ENCODE measurements at regions of chr12 and their contacts with region 1.

Region 1: DNA sequence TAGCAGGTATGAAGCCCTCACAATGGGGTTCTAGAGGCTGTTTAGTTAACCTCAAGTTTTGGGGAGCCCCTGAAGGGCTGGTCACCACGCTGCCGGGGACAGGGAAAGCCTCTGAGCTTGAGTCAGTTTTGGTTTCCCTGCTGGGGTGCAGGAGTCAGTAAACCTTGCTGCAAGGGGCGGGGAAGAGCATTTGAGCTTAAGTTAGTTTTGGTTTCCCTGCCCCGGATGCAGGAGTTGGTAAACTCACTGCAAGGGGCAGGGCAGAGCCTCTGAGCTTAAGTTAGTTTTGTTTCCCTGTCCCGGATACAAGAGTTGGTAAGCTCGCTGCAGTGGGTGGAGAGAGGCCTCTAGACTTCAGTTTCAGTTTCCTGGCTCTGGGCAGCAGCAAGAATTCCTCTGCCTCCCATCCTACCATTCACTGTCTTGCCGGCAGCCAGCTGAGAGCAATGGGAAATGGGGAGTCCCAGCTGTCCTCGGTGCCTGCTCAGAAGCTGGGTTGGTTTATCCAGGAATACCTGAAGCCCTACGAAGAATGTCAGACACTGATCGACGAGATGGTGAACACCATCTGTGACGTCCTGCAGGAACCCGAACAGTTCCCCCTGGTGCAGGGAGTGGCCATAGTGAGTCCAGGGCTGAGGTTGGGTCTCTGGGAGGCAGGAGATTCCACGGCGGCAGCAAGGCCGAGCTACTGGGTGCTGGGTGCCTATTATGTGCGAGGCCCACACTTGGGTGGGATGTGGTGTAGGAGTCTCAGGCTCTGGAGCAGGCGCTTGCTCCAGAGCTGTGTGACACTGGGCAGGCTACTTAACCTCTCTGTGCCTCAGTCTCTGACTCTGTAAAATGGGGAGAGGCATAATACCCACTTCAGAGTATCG is at the start of gene OAS2:
- DNase-seq: peak; percentile 91
- ATAC-seq: peak; percentile 91
- H3K4me3 Mint-ChIP-seq: peak within 1 kb of the TSS; percentile 99
- H3K27ac Mint-ChIP-seq: peak within 1 kb of the TSS; percentile 99
- H3K4me1 Mint-ChIP-seq: peaks cover 35% of the 10 kb centered on the region
- H3K27me3 Mint-ChIP-seq: no peaks in the 10 kb centered on the region
- CTCF ChIP-seq: no peak
- total RNA-seq, gene OAS2: 95.7 to 104 TPM

Region 2: GRCh38 chr12:112887550-112887949 is 90.9 kb before region 1 on chr12:
- CTCF ChIA-PET with region 1: no interaction called
- POLR2A ChIA-PET with region 1: no interaction called
- intact Hi-C with region 1: no loop called
- DNase-seq: no peak
- ATAC-seq: no peak
- H3K4me3 Mint-ChIP-seq: no peak overlapping the region
- H3K27ac Mint-ChIP-seq: no peak overlapping the region
- H3K4me1 Mint-ChIP-seq: no peaks in the 10 kb centered on the region
- H3K27me3 Mint-ChIP-seq: peaks cover 2% of the 10 kb centered on the region
- CTCF ChIP-seq: no peak

Region 3: DNA sequence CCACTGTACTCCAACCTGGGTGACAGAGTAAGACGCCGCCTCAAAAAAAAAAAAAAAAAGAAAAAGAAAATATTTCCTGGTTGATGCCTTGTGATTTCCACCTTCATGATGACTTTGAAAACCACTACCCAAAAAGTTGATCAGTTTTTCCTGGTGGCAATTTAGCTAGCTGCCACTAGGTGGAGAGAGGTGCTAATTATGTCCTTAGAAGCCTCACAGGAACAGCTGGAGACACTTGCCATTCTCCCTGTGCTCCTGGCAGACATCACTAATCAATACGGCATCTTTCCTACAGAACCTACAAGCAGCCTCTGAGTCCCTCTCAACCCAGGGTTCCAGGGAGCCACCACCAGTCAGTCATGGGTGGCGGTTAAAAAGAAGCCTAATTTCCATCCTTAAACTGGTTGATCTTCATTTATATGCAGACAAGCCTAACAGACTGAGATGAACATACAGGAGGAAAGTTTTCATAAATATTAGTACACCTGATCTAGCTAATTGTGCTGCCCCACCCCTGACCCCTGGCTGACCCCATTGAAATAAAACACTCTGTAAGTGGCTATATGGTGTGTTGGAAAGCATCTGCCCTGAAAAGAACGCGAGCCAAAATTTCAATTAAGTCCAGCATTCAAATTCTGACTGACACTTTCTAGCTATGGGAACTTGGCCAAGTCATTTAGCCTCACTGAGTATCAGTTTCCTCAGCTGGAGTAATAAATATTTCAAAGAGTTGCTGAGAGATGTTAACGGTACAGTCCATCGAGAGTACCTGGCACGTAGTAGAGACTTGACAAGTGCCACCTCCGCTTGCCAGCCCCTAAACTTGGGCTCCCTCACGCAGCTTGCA is 77.9 kb before region 1 on chr12:
- CTCF ChIA-PET with region 1: interaction called, 24 read pairs
- POLR2A ChIA-PET with region 1: interaction called, 5 read pairs
- intact Hi-C with region 1: no loop called
- DNase-seq: peak; percentile 60
- ATAC-seq: peak; percentile 67
- H3K4me3 Mint-ChIP-seq: no peak overlapping the region
- H3K27ac Mint-ChIP-seq: no peak overlapping the region
- H3K4me1 Mint-ChIP-seq: peaks cover 15% of the 10 kb centered on the region
- H3K27me3 Mint-ChIP-seq: no peaks in the 10 kb centered on the region
- CTCF ChIP-seq: peak; percentile 86

Region 4: DNA sequence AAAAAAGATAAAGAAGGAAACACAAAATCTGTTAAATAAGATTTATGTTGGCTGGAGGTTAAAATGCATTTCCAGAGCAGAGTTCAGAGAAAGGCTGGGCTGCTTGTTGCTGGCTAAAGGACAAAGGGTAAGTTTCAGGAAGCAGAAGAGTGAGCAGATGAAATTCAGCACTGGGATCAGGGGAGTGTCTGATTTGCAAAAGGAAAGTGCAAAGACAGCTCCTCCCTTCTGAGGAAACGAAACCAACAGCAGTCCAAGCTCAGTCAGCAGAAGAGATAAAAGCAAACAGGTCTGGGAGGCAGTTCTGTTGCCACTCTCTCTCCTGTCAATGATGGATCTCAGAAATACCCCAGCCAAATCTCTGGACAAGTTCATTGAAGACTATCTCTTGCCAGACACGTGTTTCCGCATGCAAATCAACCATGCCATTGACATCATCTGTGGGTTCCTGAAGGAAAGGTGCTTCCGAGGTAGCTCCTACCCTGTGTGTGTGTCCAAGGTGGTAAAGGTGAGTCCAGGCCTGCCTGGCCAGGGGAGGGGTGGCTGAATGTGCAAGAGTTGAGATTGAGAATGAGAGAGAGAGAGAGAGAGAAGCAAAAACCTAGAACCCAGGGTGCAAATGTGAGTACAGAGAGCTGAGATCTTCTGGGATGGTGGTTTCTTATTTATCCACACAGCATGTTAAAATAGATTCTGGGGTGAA is 71.5 kb before region 1 on chr12 and contains the start of gene OAS1:
- CTCF ChIA-PET with region 1: interaction called, 24 read pairs
- POLR2A ChIA-PET with region 1: interaction called, 28 read pairs
- intact Hi-C with region 1: no loop called
- DNase-seq: peak; percentile 44
- ATAC-seq: peak; percentile 89
- H3K4me3 Mint-ChIP-seq: peak within 1 kb of the TSS; percentile 94
- H3K27ac Mint-ChIP-seq: peak within 1 kb of the TSS; percentile 94
- H3K4me1 Mint-ChIP-seq: peaks cover 51% of the 10 kb centered on the region
- H3K27me3 Mint-ChIP-seq: no peaks in the 10 kb centered on the region
- CTCF ChIP-seq: no peak
- total RNA-seq, gene OAS1: 22.7 to 26.8 TPM

Region 5: GRCh38 chr12:112937741-112938719 is 40.4 kb before region 1 on chr12 and contains the start of gene OAS3:
- CTCF ChIA-PET with region 1: interaction called, 11 read pairs
- POLR2A ChIA-PET with region 1: interaction called, 28 read pairs
- intact Hi-C with region 1: no loop called
- DNase-seq: peak; percentile 63
- ATAC-seq: peak; percentile 68
- H3K4me3 Mint-ChIP-seq: peak within 1 kb of the TSS; percentile 82
- H3K27ac Mint-ChIP-seq: peak within 1 kb of the TSS; percentile 84
- H3K4me1 Mint-ChIP-seq: peaks cover 28% of the 10 kb centered on the region
- H3K27me3 Mint-ChIP-seq: no peaks in the 10 kb centered on the region
- CTCF ChIP-seq: no peak
- total RNA-seq, gene OAS3: 21.4 to 22.2 TPM

Region 6: GRCh38 chr12:112963227-112963867 is 15.1 kb before region 1 on chr12:
- CTCF ChIA-PET with region 1: no interaction called
- POLR2A ChIA-PET with region 1: interaction called, 32 read pairs
- intact Hi-C with region 1: no loop called
- DNase-seq: no peak
- ATAC-seq: no peak
- H3K4me3 Mint-ChIP-seq: no peak overlapping the region
- H3K27ac Mint-ChIP-seq: no peak overlapping the region
- H3K4me1 Mint-ChIP-seq: peaks cover 3% of the 10 kb centered on the region
- H3K27me3 Mint-ChIP-seq: no peaks in the 10 kb centered on the region
- CTCF ChIP-seq: no peak

Region 7: GRCh38 chr12:113152835-113153814 is 174.7 kb after region 1 on chr12:
- CTCF ChIA-PET with region 1: no interaction called
- POLR2A ChIA-PET with region 1: no interaction called
- intact Hi-C with region 1: no loop called
- DNase-seq: peak; percentile 83
- ATAC-seq: peak; percentile 83
- H3K4me3 Mint-ChIP-seq: peak overlapping the region; percentile 72
- H3K27ac Mint-ChIP-seq: peak overlapping the region; percentile 73
- H3K4me1 Mint-ChIP-seq: peaks cover 28% of the 10 kb centered on the region
- H3K27me3 Mint-ChIP-seq: peaks cover 21% of the 10 kb centered on the region
- CTCF ChIP-seq: peak; percentile 51